ENCODE measurements at regions of chr1 and their contacts with region 1.

Region 1: GRCh38 chr1:95233737-95234500 is at the start of gene RWDD3:
- DNase-seq: peak; percentile 89
- H3K4me3 ChIP-seq: peak within 1 kb of the TSS; percentile 96 to 99 (median 99)
- H3K27ac ChIP-seq: peak within 1 kb of the TSS; percentile 77
- H3K4me1 ChIP-seq: peaks cover 11% of the 10 kb centered on the region
- H3K27me3 ChIP-seq: no peaks in the 10 kb centered on the region
- CTCF ChIP-seq: peak; percentile 56 to 68
- total RNA-seq, gene RWDD3: 10.3 to 14.0 TPM

Region 2: DNA sequence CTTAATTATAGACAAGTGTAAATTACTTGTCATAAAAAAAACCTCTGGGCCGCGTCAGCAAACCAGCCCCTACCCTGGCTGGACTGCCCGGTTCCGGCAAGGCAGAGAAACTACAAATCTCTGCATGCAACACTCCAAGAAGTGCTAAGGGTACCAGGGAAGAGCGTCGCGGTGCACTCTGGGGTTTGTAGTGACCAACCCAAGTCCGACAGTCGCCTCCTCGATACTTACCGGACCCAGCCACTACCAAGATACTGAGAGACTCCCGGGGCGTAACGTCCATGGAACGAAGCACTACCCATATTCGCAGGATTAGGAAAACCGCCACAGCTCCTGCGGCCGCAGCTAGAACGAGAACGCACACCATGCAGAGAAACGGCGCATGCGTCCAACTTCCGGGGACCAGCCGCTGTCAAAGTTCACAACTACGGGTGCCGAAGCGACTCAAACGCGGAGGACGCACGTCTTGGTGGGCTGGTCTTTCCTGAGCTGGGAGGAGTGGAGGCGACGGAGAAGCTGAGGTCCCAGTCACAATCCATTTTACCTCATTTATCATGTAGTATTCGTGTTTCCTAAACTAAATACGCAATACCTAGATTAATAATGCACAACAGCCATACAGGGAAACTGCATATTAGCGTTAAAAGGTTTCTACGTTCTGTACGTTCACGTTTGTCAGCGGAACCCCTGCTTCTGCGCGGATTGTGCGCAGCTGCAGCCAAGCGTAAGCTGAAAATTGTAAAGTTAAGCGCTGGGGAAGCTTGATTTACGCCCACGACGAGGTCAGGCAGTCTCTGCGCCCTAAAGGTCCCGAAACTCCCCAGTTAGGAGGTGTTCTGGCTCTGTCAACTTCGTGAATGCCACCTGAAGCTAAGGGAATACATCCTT is 161.1 kb before region 1 on chr1 and contains the start of gene ALG14:
- CTCF ChIA-PET with region 1: interaction called, 5 read pairs
- dilution Hi-C with region 1: loop called (anchors 25 kb)
- in situ Hi-C with region 1: loop called in 1 of 2 experiments (anchors 25 kb)
- intact Hi-C with region 1: loop called (anchors 2 kb)
- DNase-seq: peak; percentile 94
- H3K4me3 ChIP-seq: peak within 1 kb of the TSS; percentile 66 to 81 (median 71)
- H3K27ac ChIP-seq: peak within 1 kb of the TSS; percentile 82
- H3K4me1 ChIP-seq: peaks cover 6% of the 10 kb centered on the region
- H3K27me3 ChIP-seq: no peaks in the 10 kb centered on the region
- CTCF ChIP-seq: no peak
- total RNA-seq, gene ALG14: 1.2 to 6.5 TPM

Region 3: GRCh38 chr1:95084317-95085176 is 149.4 kb before region 1 on chr1:
- CTCF ChIA-PET with region 1: interaction called, 14 read pairs
- dilution Hi-C with region 1: no loop called
- in situ Hi-C with region 1: loop called (anchors 10 to 25 kb)
- intact Hi-C with region 1: loop called (anchors 1 kb)
- DNase-seq: no peak
- H3K4me3 ChIP-seq: no peak overlapping the region
- H3K27ac ChIP-seq: no peak overlapping the region
- H3K4me1 ChIP-seq: peaks cover 7% of the 10 kb centered on the region
- H3K27me3 ChIP-seq: no peaks in the 10 kb centered on the region
- CTCF ChIP-seq: peak; percentile 67 to 80

Region 4: DNA sequence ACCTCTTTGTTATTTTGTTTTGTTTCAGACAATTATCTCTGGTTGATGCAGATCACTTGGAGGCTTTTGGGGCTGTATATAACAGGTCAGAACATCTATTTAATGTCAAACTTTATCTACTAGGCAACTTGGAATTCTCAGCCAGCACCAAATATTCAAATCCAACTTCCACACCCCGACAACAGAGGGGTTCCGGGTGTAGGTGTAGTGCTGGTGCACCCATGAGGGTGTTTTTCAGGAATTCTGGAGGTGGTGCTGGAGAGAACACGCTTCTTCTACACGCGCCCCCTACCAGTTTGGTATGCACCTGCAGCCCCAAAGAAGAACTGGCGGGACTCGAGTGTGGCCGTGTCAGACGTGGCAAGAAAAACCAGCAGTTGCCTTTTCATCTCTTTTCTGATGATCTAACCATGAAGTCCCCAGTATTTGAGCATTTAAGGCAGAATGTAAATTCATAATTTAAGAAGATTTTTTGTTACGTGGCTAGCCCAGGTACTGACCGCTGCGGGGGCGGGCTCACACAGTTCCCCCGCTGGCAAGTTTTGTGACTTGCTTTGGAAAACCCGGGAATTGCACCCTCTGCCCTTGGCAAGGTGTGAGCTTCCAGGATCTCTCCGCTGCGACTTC is 117.2 kb before region 1 on chr1:
- CTCF ChIA-PET with region 1: interaction called, 4 read pairs
- dilution Hi-C with region 1: no loop called
- in situ Hi-C with region 1: no loop called
- intact Hi-C with region 1: loop called (anchors 2 kb)
- DNase-seq: peak; percentile 46
- H3K4me3 ChIP-seq: peak overlapping the region; percentile 61 to 70 (median 64)
- H3K27ac ChIP-seq: no peak overlapping the region
- H3K4me1 ChIP-seq: peaks cover 7% of the 10 kb centered on the region
- H3K27me3 ChIP-seq: peaks cover 6% of the 10 kb centered on the region
- CTCF ChIP-seq: peak; percentile 49 to 62

Region 5: DNA sequence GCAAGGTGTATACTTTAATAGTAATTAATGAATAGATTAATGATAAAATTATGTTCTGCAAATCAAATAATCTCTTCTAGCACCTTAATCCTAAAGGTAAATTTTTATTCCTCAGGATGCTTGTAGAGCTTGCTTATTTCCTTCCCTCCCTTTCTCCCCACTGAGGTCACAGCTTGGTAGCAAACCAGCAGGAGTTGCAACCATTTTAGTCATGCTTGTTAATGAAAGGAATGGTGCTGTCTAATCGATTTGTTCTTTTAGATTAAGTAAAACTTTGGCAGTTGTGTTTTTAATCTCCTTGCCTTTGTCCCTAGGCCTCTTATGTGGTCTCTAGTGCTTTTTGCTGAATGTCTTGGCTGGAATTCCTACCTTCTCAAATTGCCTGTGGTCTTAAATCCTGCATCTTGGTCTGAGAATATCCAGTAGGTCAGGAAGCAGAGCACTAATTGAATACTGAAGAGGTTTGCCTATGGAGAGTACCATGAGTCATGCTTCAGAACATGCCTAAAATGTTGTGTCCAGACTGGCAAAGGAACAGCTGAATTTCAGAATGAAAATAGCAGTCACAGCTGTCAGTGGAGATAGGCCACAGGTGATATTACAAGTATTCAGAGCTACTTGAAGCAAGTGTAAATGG is 36.2 kb before region 1 on chr1:
- CTCF ChIA-PET with region 1: no interaction called
- dilution Hi-C with region 1: no loop called
- in situ Hi-C with region 1: no loop called
- intact Hi-C with region 1: no loop called
- DNase-seq: peak; percentile 78
- H3K4me3 ChIP-seq: no peak overlapping the region
- H3K27ac ChIP-seq: peak overlapping the region; percentile 24
- H3K4me1 ChIP-seq: peaks cover 11% of the 10 kb centered on the region
- H3K27me3 ChIP-seq: no peaks in the 10 kb centered on the region
- CTCF ChIP-seq: no peak